Calu3 (cell line): ENCODE measurements at regions of chr3 and their contacts with region 1.

Region 1: GRCh38 chr3:124351430-124352148 is 359.7 kb upstream of the ROPN1 start:
- DNase-seq: peak; percentile 22
- H3K4me3 Mint-ChIP-seq: no peak overlapping the region
- H3K27ac Mint-ChIP-seq: no peak overlapping the region
- H3K4me1 Mint-ChIP-seq: no peaks in the 10 kb centered on the region
- H3K27me3 Mint-ChIP-seq: peaks cover 66% of the 10 kb centered on the region
- CTCF ChIP-seq: peak; percentile 13

Region 2: DNA sequence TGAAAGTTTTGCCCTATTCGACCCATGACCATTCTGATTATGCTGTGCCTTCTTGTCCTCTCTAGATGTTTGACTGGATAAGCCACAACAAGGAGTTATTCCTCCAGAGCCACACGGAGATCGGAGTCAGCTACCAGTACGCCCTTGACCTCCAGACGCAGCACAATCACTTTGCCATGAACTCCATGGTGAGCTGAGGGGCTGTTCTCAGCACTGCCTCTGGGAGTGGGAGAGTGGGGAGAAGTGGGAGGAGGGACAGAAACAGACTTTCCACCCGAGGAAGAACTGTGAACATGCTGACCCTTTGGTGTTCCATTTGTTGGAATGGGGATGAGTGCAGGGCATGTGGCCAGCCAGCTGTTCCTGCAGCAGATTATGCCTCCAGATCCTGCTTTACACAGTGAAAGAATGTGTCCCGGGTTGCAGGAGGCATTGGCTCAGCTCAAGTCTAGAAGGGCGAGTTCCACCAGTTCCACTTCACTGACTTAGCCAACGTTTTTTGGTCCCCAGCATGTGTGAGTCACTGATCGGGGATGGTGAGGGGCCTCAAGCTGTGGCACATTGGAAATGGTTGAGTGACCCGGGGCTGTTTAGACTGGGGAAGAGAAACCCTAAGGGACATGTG is 52.8 kb before region 1 on chr3:
- CTCF ChIA-PET with region 1: no interaction called
- intact Hi-C with region 1: no loop called
- DNase-seq: no peak
- H3K4me3 Mint-ChIP-seq: no peak overlapping the region
- H3K27ac Mint-ChIP-seq: no peak overlapping the region
- H3K4me1 Mint-ChIP-seq: no peaks in the 10 kb centered on the region
- H3K27me3 Mint-ChIP-seq: peaks cover 91% of the 10 kb centered on the region
- CTCF ChIP-seq: no peak

Region 3: GRCh38 chr3:124395584-124396338 is 44.2 kb after region 1 on chr3:
- CTCF ChIA-PET with region 1: no interaction called
- intact Hi-C with region 1: no loop called
- DNase-seq: no peak
- H3K4me3 Mint-ChIP-seq: no peak overlapping the region
- H3K27ac Mint-ChIP-seq: no peak overlapping the region
- H3K4me1 Mint-ChIP-seq: no peaks in the 10 kb centered on the region
- H3K27me3 Mint-ChIP-seq: peaks cover 83% of the 10 kb centered on the region
- CTCF ChIP-seq: no peak

Region 4: DNA sequence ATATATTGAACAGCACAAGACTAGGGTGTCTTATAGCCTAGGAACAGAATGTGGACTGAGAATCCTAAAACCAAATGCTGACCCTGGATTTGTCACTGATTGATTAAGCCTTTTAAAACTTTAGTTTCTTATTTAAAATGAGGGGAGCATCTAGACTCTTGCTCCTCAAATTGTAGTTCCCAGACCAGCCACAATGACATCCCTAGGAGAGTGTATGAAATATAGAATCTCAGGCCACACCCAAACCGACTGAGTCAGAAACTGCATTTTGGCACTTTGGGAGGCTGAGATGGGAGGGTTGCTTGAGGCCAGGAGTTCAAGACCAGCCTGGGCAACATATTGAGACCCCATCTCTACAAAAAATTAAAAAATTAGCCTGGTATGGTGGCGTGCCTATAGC is 90.9 kb after region 1 on chr3:
- CTCF ChIA-PET with region 1: no interaction called
- intact Hi-C with region 1: no loop called
- DNase-seq: no peak
- H3K4me3 Mint-ChIP-seq: no peak overlapping the region
- H3K27ac Mint-ChIP-seq: no peak overlapping the region
- H3K4me1 Mint-ChIP-seq: no peaks in the 10 kb centered on the region
- H3K27me3 Mint-ChIP-seq: peaks cover 78% of the 10 kb centered on the region
- CTCF ChIP-seq: no peak

Region 5: DNA sequence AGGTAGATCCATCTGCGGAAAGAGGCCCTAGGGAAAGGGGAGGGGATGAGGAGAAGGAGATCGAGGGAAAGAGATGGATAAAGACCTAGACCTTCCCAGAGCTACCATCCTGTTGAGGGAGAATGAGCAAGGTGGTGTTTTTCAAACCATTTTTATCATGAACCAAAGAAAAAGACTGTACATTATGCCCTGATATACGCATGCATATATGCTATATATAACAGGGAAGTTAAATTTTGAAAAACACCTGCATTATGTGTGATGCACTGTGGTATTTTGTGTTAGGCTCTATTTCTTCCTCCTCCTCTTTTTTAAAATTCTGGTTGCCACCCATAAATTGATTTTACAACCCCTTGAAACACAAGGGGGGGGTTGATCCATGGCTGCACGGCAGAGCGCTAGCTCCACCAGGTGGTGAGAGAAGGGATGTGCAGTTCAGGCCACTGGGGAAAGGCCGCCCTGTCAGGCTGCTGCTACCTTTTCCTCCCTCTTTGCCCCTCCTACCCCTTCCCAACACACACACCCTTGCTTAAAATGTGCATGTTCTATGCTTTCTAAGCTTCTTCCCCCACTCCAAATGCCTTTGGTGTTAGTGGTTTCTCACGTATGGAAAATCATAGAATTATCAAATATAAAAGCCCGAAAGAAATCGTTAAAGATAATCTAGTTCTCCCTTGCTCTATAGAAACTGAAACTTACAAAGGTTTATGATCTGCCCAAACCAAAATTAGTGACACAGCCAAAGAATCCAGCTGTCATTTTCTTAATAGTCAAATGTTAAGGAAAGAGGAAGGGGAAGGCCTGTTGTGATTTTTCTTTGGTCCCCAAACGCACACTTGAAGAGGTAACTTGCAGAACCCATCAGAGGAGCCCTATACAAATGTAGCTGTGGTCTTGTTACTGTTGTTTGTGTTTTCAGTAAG is 116.7 kb after region 1 on chr3:
- CTCF ChIA-PET with region 1: interaction called, 14 read pairs
- intact Hi-C with region 1: loop called (anchors 1 kb)
- DNase-seq: peak; percentile 66
- H3K4me3 Mint-ChIP-seq: no peak overlapping the region
- H3K27ac Mint-ChIP-seq: no peak overlapping the region
- H3K4me1 Mint-ChIP-seq: no peaks in the 10 kb centered on the region
- H3K27me3 Mint-ChIP-seq: peaks cover 71% of the 10 kb centered on the region
- CTCF ChIP-seq: peak; percentile 90

Region 6: GRCh38 chr3:124552239-124552638 is 200.7 kb after region 1 on chr3:
- CTCF ChIA-PET with region 1: interaction called, 12 read pairs
- intact Hi-C with region 1: loop called (anchors 2 kb)
- DNase-seq: peak; percentile 78
- H3K4me3 Mint-ChIP-seq: no peak overlapping the region
- H3K27ac Mint-ChIP-seq: no peak overlapping the region
- H3K4me1 Mint-ChIP-seq: peaks cover 4% of the 10 kb centered on the region
- H3K27me3 Mint-ChIP-seq: peaks cover 91% of the 10 kb centered on the region
- CTCF ChIP-seq: no peak